SK-N-SH (cell line): ENCODE measurements at regions of chr3 and their contacts with region 1.

Region 1: GRCh38 chr3:73007992-73008712 is 11.5 kb downstream of the PPP4R2 start:
- DNase-seq: no peak
- H3K4me3 ChIP-seq: no peak overlapping the region
- H3K27ac ChIP-seq: no peak overlapping the region
- H3K4me1 ChIP-seq: peaks cover 0 to 5% of the 10 kb centered on the region in 2 experiments; a peak in 2 of 4 replicates
- H3K27me3 ChIP-seq: no peaks in the 10 kb centered on the region
- CTCF ChIP-seq: no peak
- EP300 ChIP-seq: no peak
- RAD21 ChIP-seq: no peak

Region 2: GRCh38 chr3:72996473-72997333 is 11.4 kb before region 1 on chr3 and contains the start of gene PPP4R2:
- CTCF ChIA-PET with region 1: interaction called, 16 read pairs
- POLR2A ChIA-PET with region 1: interaction called, 5 read pairs
- DNase-seq: peak; percentile 94
- H3K4me3 ChIP-seq: peak within 1 kb of the TSS; percentile 78 to 83
- H3K27ac ChIP-seq: peak within 1 kb of the TSS; percentile 90 to 92
- H3K4me1 ChIP-seq: peaks cover 3 to 11% of the 10 kb centered on the region in 2 experiments; a peak in 2 of 4 replicates
- H3K27me3 ChIP-seq: no peaks in the 10 kb centered on the region
- CTCF ChIP-seq: no peak; the same call in 1 of the 2 replicates
- EP300 ChIP-seq: no peak
- RAD21 ChIP-seq: no peak
- polyA plus RNA-seq, gene PPP4R2: 8.9 and 11.3 TPM in 2 replicates

Region 3: DNA sequence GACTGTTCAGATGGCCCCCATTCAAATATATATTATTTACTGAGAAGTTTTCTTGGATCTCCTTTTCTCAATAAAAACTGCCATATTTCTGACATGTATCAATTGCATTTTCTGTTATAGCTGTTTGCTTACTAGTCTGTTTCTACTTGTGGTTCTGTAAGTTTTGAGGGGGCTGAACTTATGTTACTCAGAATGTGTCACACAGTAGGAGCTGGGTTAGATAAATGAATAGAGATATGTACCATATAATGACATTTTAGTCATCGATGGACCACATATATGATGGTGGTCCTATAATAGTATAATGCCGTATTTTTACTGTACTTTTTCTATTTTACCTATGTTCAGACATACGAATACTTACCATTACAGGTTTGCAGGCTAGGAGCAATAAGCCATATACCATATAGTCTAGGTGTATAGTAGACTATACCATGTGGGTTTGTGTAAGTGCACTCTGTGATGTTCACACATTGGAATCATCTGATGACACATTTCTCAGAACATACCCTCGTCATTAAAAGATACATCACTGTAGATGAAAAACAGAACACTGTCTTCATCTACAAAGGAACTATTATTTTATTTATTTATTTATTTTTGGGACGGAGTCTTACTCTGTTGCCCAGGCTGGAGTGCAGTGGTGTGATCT is 10.8 kb after region 1 on chr3:
- CTCF ChIA-PET with region 1: no interaction called
- POLR2A ChIA-PET with region 1: no interaction called
- DNase-seq: no peak
- H3K4me3 ChIP-seq: no peak overlapping the region
- H3K27ac ChIP-seq: no peak overlapping the region
- H3K4me1 ChIP-seq: no peaks in the 10 kb centered on the region
- H3K27me3 ChIP-seq: no peaks in the 10 kb centered on the region
- CTCF ChIP-seq: no peak
- EP300 ChIP-seq: no peak
- RAD21 ChIP-seq: no peak